CD8-positive, alpha-beta T cell (primary cell): ENCODE measurements at regions of chr21 and their contacts with region 1.

Region 1: DNA sequence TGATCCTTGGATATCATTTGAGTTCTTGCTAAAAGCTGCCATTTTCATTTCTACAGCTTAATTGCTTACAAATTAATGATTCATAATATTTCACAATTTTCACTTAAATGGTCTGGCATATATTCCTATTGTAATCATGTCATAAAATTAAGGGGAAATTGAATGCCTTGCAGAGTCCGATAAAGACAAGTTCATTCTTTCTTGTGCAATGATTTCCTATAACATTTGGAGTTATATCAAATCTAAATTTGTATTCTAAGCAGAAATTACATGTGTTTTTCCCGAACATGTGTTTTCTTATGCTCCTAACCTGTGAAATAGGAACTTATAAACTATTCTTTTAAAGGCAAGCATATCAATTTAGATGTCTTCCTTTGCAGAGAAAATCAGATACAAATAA is 118.3 kb upstream of the CYYR1 start:
- DNase-seq: no peak
- ATAC-seq: no peak
- H3K4me3 ChIP-seq: no peak overlapping the region
- H3K4me3 Mint-ChIP-seq: no peak overlapping the region
- H3K27ac ChIP-seq: no peak overlapping the region
- H3K27ac Mint-ChIP-seq: no peak overlapping the region
- H3K4me1 ChIP-seq: no peaks in the 10 kb centered on the region
- H3K4me1 Mint-ChIP-seq: peaks cover 3% of the 10 kb centered on the region
- H3K27me3 ChIP-seq: peaks cover 0 to 2% of the 10 kb centered on the region in 2 experiments
- H3K27me3 Mint-ChIP-seq: peaks cover 5% of the 10 kb centered on the region
- CTCF ChIP-seq: no peak

Region 2: GRCh38 chr21:26669215-26669764 is 22.1 kb before region 1 on chr21:
- CTCF ChIA-PET with region 1: no interaction called
- POLR2A ChIA-PET with region 1: no interaction called
- intact Hi-C with region 1: loop called in 1 of 2 experiments (anchors 1 kb)
- DNase-seq: no peak
- ATAC-seq: no peak
- H3K4me3 ChIP-seq: no peak overlapping the region
- H3K4me3 Mint-ChIP-seq: no peak overlapping the region
- H3K27ac ChIP-seq: no peak overlapping the region
- H3K27ac Mint-ChIP-seq: no peak overlapping the region
- H3K4me1 ChIP-seq: no peaks in the 10 kb centered on the region
- H3K4me1 Mint-ChIP-seq: no peaks in the 10 kb centered on the region
- H3K27me3 ChIP-seq: no peaks in the 10 kb centered on the region
- H3K27me3 Mint-ChIP-seq: peaks cover 2% of the 10 kb centered on the region
- CTCF ChIP-seq: no peak